Natural killer cell (primary cell): ENCODE measurements at regions of chr1 and their contacts with region 1.

Region 1: GRCh38 chr1:25616095-25616986 is at the start of gene MAN1C1:
- DNase-seq: peak; percentile 83 to 92
- ATAC-seq: peak; percentile 82 to 93 (median 85)
- H3K4me3 ChIP-seq: peak within 1 kb of the TSS; percentile 66
- H3K4me3 Mint-ChIP-seq: peak within 1 kb of the TSS; percentile 79
- H3K27ac ChIP-seq: peak within 1 kb of the TSS; percentile 67
- H3K27ac Mint-ChIP-seq: peak within 1 kb of the TSS; percentile 79
- H3K4me1 ChIP-seq: peaks cover 55% of the 10 kb centered on the region
- H3K4me1 Mint-ChIP-seq: peaks cover 50 to 58% of the 10 kb centered on the region in 2 donors
- H3K27me3 ChIP-seq: peaks cover 2% of the 10 kb centered on the region
- H3K27me3 Mint-ChIP-seq: peaks cover under 1 to 13% of the 10 kb centered on the region in 2 donors
- CTCF ChIP-seq: peak; percentile 32
- total RNA-seq, gene MAN1C1: 3.6 to 7.5 (median 7.1) TPM

Region 2: DNA sequence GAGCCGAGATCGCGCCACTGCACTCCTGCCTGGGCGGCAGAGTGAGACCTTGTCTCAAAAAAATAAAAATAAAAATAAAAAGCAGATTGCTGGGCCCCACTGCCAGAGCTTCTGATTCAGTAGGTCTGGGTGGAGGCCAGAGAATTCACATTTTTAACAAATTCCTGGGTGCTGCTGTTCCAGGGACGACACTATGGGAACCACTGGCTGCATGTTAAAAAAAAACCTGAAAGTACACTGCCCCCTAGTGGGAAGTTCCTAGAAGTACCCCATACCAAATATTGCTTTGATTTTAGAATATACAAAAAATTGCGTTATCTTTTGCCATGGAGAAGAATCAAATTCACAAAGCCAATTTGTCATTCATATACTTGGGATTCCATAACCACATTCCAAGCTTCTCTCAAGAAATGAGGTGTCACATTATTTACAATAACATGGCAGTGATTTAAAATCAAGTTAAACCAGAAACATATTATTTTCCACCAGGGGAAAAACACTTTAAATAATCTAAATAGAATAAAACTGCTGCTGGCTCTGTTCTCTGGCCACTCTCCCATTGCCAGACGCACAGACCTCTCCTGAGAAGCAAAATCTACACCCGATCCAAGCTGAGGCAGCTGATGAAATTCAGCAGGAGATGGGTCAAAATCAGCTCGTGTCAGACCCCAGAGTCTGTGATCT is 411.4 kb before region 1 on chr1:
- intact Hi-C with region 1: no loop called
- DNase-seq: peak in 1 of 2 donors; percentile 75
- ATAC-seq: peak; percentile 73 to 87 (median 86)
- H3K4me3 ChIP-seq: no peak overlapping the region
- H3K4me3 Mint-ChIP-seq: no peak overlapping the region
- H3K27ac ChIP-seq: no peak overlapping the region
- H3K27ac Mint-ChIP-seq: no peak overlapping the region
- H3K4me1 ChIP-seq: no peaks in the 10 kb centered on the region
- H3K4me1 Mint-ChIP-seq: no peaks in the 10 kb centered on the region
- H3K27me3 ChIP-seq: no peaks in the 10 kb centered on the region
- H3K27me3 Mint-ChIP-seq: peaks cover 3 to 13% of the 10 kb centered on the region in 2 donors
- CTCF ChIP-seq: peak; percentile 83

Region 3: GRCh38 chr1:25549273-25550154 is 66.8 kb before region 1 on chr1:
- intact Hi-C with region 1: no loop called
- DNase-seq: peak; percentile 36 to 78
- ATAC-seq: peak; percentile 70 to 87 (median 83)
- H3K4me3 ChIP-seq: peak overlapping the region; percentile 3
- H3K4me3 Mint-ChIP-seq: peak overlapping the region; percentile 60
- H3K27ac ChIP-seq: peak overlapping the region; percentile 55
- H3K27ac Mint-ChIP-seq: peak overlapping the region; percentile 74 to 85
- H3K4me1 ChIP-seq: peaks cover 66% of the 10 kb centered on the region
- H3K4me1 Mint-ChIP-seq: peaks cover 37 to 66% of the 10 kb centered on the region in 2 donors
- H3K27me3 ChIP-seq: no peaks in the 10 kb centered on the region
- H3K27me3 Mint-ChIP-seq: no peaks in the 10 kb centered on the region
- CTCF ChIP-seq: no peak

Region 4: GRCh38 chr1:25700144-25700523 is 83.8 kb after region 1 on chr1:
- intact Hi-C with region 1: loop called (anchors 5 kb)
- DNase-seq: no peak
- ATAC-seq: no peak
- H3K4me3 ChIP-seq: no peak overlapping the region
- H3K4me3 Mint-ChIP-seq: no peak overlapping the region
- H3K27ac ChIP-seq: no peak overlapping the region
- H3K27ac Mint-ChIP-seq: no peak overlapping the region
- H3K4me1 ChIP-seq: peaks cover 13% of the 10 kb centered on the region
- H3K4me1 Mint-ChIP-seq: peaks cover 15 to 20% of the 10 kb centered on the region in 2 donors
- H3K27me3 ChIP-seq: peaks cover 9% of the 10 kb centered on the region
- H3K27me3 Mint-ChIP-seq: peaks cover 17 to 32% of the 10 kb centered on the region in 2 donors
- CTCF ChIP-seq: no peak

Region 5: GRCh38 chr1:25796811-25797458 is 180.6 kb after region 1 on chr1:
- intact Hi-C with region 1: loop called (anchors 10 kb)
- DNase-seq: peak; percentile 59 to 89
- ATAC-seq: peak; percentile 54 to 60 (median 55)
- H3K4me3 ChIP-seq: no peak overlapping the region
- H3K4me3 Mint-ChIP-seq: peak overlapping the region; percentile 52
- H3K27ac ChIP-seq: no peak overlapping the region
- H3K27ac Mint-ChIP-seq: peak overlapping the region; percentile 36 to 37
- H3K4me1 ChIP-seq: peaks cover 36% of the 10 kb centered on the region
- H3K4me1 Mint-ChIP-seq: peaks cover 14 to 30% of the 10 kb centered on the region in 2 donors
- H3K27me3 ChIP-seq: no peaks in the 10 kb centered on the region
- H3K27me3 Mint-ChIP-seq: peaks cover 0 to 3% of the 10 kb centered on the region in 2 donors
- CTCF ChIP-seq: peak; percentile 51